GM12878 (cell line): ENCODE measurements at regions of chr15 and their contacts with region 1.

Region 1: GRCh38 chr15:49620658-49621368 is at the starts of genes DTWD1 and FAM227B:
- DNase-seq: peak; percentile 89
- ATAC-seq: peak; percentile 98
- H3K4me3 ChIP-seq: peak within 1 kb of the TSS; percentile 95
- H3K27ac ChIP-seq: peak within 1 kb of the TSS; percentile 88
- H3K4me1 ChIP-seq: no peaks in the 10 kb centered on the region
- H3K27me3 ChIP-seq: no peaks in the 10 kb centered on the region
- CTCF ChIP-seq: 0 out of 6 replicates have a peak, but pooled peaks of 1 of the 3 experiments have one; percentile 1
- EP300 ChIP-seq: peak in 1 of 2 experiments; percentile 66; a peak in 1 of 4 replicates
- POLR2A ChIP-seq: peak; percentile 98
- RAD21 ChIP-seq: no peak
- polyA plus RNA-seq, gene DTWD1: 23.9 to 31.9 TPM
- polyA plus RNA-seq, gene FAM227B: 6.1 to 7.1 TPM

Region 2: DNA sequence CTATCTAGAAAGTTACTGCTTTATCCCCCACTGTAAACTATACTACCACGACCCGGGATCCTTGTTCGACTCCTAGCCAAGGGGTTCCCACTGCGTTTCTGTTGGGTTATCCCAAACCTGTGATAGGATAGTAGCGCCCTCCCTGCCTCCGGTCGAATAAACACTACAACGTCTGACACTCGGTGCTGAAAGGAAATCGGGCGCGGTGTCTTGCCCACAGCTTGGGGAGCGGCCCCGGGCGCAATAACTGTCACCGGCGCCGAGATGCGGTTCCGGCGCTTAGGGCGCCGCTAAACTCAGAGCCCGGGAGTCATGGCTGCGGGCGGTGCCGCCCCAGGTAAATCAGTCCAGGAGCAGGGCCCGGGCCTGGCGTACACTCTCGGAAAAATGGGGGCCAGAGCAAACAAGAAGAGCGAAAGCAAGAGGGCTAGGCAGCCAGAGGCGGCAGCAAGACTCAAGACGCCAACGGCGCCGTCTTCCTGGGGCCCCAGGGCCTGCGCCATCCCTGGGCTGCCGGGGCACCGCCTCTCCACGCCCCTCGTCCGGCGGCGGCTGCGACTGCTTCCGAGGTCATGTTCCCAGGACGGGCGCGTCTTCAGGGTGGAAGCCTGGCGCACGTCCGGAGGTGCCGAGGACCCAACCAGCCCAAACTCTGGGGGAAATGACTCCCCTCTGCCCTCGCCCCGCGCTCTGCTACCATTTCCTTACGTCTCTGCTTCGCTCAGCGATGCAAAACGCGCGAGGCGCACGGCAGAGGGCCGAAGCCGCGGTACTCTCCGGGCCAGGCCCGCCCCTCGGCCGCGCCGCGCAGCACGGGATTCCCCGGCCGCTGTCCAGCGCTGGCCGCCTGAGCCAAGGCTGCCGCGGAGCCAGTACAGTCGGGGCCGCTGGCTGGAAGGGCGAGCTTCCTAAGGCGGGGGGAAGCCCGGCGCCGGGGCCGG is 1289.7 kb before region 1 on chr15 and contains the start of gene DUT:
- CTCF ChIA-PET with region 1: no interaction called
- POLR2A ChIA-PET with region 1: no interaction called
- RAD21 ChIA-PET with region 1: no interaction called
- SMC1A ChIA-PET with region 1: no interaction called
- in situ Hi-C with region 1: loop called (anchors 25 kb)
- intact Hi-C with region 1: loop called (anchors 10 kb)
- DNase-seq: peak; percentile 39
- ATAC-seq: peak; percentile 91
- H3K4me3 ChIP-seq: peak within 1 kb of the TSS; percentile 91
- H3K27ac ChIP-seq: peak within 1 kb of the TSS; percentile 89
- H3K4me1 ChIP-seq: peaks cover 5% of the 10 kb centered on the region; the same call in 1 of the 2 replicates
- H3K27me3 ChIP-seq: no peaks in the 10 kb centered on the region
- CTCF ChIP-seq: no peak
- EP300 ChIP-seq: no peak
- POLR2A ChIP-seq: peak; percentile 94
- RAD21 ChIP-seq: no peak
- polyA plus RNA-seq, gene DUT: 20.1 to 88.1 TPM

Region 3: DNA sequence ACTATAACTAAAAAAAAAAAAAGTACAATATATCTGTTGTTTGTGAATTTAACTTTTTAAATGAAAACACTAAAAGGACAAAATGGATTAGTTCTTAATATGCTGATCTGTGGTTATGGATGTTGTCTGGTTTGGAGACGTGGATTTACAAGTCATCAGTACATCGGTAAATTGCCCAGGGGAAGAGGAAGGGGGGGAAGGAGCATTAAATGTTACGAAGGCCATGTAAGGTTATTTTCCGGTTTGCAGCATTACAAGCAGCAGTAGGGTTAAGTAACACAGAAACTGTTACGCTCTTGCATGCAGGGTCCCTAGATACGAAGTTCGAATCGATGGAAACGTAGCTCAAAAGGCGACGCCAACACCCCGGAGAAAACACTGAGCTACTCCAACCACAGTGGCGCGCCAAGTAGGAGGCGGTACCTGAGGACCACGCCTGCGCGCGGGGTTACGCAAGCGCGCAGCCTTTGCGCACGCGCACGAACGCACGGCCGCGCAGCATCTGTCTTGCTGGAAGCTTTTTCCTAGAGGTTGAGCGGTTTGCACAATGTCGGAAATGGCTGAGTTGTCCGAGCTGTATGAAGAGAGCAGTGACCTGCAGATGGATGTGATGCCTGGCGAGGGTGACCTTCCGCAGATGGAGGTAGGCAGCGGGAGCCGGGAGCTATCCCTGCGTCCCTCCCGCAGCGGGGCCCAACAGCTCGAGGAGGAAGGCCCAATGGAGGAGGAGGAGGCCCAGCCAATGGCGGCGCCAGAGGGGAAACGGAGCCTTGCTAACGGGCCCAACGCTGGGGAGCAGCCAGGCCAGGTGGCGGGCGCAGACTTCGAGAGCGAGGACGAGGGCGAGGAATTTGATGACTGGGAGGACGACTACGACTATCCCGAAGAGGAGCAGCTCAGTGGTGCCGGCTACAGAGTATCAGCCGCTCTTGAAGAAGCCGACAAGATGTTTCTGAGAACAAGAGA is 742.9 kb before region 1 on chr15 and contains the start of gene EID1:
- CTCF ChIA-PET with region 1: no interaction called
- POLR2A ChIA-PET with region 1: no interaction called
- RAD21 ChIA-PET with region 1: no interaction called
- SMC1A ChIA-PET with region 1: interaction called, 3 read pairs
- in situ Hi-C with region 1: loop called (anchors 10 kb)
- intact Hi-C with region 1: no loop called
- DNase-seq: peak; percentile 87
- ATAC-seq: peak; percentile 94
- H3K4me3 ChIP-seq: peak within 1 kb of the TSS; percentile 67
- H3K27ac ChIP-seq: peak within 1 kb of the TSS; percentile 85
- H3K4me1 ChIP-seq: peaks cover 4% of the 10 kb centered on the region
- H3K27me3 ChIP-seq: no peaks in the 10 kb centered on the region
- CTCF ChIP-seq: no peak
- EP300 ChIP-seq: peak in 1 of 2 experiments; percentile 40; a peak in 1 of 4 replicates
- POLR2A ChIP-seq: peak; percentile 98
- RAD21 ChIP-seq: no peak
- polyA plus RNA-seq, gene EID1: 45.6 to 79.5 TPM

Region 4: GRCh38 chr15:49155110-49155833 is 465.5 kb before region 1 on chr15 and contains the start of gene COPS2:
- CTCF ChIA-PET with region 1: no interaction called
- POLR2A ChIA-PET with region 1: no interaction called
- RAD21 ChIA-PET with region 1: no interaction called
- SMC1A ChIA-PET with region 1: no interaction called
- in situ Hi-C with region 1: loop called (anchors 10 kb)
- intact Hi-C with region 1: loop called (anchors 5 kb)
- DNase-seq: peak; percentile 98
- ATAC-seq: peak; percentile 94
- H3K4me3 ChIP-seq: peak within 1 kb of the TSS; percentile 97
- H3K27ac ChIP-seq: peak within 1 kb of the TSS; percentile 84
- H3K4me1 ChIP-seq: no peaks in the 10 kb centered on the region
- H3K27me3 ChIP-seq: no peaks in the 10 kb centered on the region
- CTCF ChIP-seq: no peak
- EP300 ChIP-seq: no peak
- POLR2A ChIP-seq: peak; percentile 95
- RAD21 ChIP-seq: no peak
- polyA plus RNA-seq, gene COPS2: 74.5 to 85.9 TPM

Region 5: GRCh38 chr15:49645903-49646302 is 25.1 kb after region 1 on chr15:
- CTCF ChIA-PET with region 1: no interaction called
- POLR2A ChIA-PET with region 1: no interaction called
- RAD21 ChIA-PET with region 1: no interaction called
- SMC1A ChIA-PET with region 1: no interaction called
- in situ Hi-C with region 1: no loop called
- intact Hi-C with region 1: no loop called
- DNase-seq: no peak
- ATAC-seq: no peak
- H3K4me3 ChIP-seq: no peak overlapping the region
- H3K27ac ChIP-seq: no peak overlapping the region
- H3K4me1 ChIP-seq: no peaks in the 10 kb centered on the region
- H3K27me3 ChIP-seq: no peaks in the 10 kb centered on the region
- CTCF ChIP-seq: no peak
- EP300 ChIP-seq: no peak
- POLR2A ChIP-seq: no peak
- RAD21 ChIP-seq: no peak

Region 6: DNA sequence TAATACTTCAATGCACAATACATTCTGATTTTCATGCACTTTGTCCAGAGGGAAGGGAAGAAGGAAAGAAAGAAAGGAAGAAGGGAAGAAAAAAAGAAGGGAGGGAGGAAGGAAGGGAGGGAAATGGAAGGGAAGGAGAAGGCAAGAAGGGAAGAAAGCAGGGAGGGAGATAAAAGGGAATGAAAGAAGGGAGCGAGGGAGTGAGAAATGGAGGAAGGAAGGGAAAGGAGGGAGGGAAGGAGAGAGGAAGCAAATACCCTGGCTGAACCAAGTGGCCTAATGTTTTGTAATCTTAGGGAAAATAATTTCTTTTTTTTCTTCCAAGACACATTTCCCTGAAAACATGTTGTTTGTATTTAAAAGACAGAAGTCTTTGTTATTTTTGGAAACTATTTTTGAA is 35.9 kb after region 1 on chr15:
- CTCF ChIA-PET with region 1: no interaction called
- POLR2A ChIA-PET with region 1: no interaction called
- RAD21 ChIA-PET with region 1: no interaction called
- SMC1A ChIA-PET with region 1: no interaction called
- in situ Hi-C with region 1: no loop called
- intact Hi-C with region 1: no loop called
- DNase-seq: no peak
- ATAC-seq: no peak
- H3K4me3 ChIP-seq: no peak overlapping the region
- H3K27ac ChIP-seq: no peak overlapping the region
- H3K4me1 ChIP-seq: no peaks in the 10 kb centered on the region
- H3K27me3 ChIP-seq: no peaks in the 10 kb centered on the region
- CTCF ChIP-seq: no peak
- EP300 ChIP-seq: no peak
- POLR2A ChIP-seq: no peak
- RAD21 ChIP-seq: no peak